Sigmoid colon (tissue), 7 donors: ENCODE measurements at regions of chr20 and their contacts with region 1.

Region 1: DNA sequence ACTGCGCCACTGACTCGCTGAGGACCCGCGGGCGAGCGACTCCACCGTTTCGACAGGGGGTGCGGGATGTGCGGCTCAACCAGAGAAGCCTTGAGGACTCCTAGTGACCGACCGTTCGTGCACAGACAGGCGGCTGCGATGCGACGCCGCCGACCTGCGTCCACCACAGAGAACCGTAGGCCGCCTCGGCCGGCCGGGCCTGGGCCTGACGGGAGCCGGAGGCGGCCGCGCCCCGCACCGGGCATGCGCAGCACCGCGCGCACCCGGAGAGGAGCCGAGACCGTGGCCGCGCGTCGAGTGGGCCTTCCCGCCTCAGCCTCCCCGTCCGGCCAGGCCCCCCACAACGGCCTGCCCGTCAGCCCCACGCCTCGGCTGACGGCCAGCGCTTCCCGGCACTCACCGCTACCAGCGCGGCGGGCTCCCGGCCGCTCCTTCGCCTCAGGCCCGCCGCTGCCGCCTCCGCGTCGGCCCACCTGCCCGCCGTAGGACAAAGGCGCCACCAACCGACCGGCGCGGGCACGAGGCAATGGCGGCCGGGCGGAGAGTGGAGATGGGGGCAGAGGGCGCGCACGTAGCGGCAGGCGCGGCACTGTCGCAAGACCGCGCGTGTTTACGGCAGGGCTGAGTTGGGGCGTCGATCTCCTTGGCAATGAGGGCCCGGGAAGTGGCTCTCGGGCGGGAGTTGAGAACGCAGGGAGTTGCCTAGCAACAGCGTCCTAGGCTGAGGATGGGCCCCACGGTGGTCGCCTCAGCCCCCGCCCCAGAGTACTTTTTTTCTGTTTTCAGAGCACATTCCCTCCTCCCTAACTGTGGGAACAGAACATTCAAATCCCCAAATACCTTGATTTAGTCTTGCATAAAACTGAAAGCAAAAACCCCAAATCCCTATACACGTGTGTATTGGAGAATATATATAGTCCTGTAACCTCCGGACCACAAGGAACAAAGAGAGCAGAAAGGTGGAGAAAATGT is at the start of gene NCOA5:
- DNase-seq: peak; percentile 98
- H3K4me3 ChIP-seq: peak within 1 kb of the TSS; percentile 68 to 85 (median 82)
- H3K27ac ChIP-seq: peak within 1 kb of the TSS; percentile 97 to 99 (median 98)
- H3K4me1 ChIP-seq: peaks cover 0 to 51% (median 44%) of the 10 kb centered on the region in 4 donors
- H3K27me3 ChIP-seq: no peaks in the 10 kb centered on the region
- CTCF ChIP-seq: no peak
- EP300 ChIP-seq: peak in 1 of 4 donors; percentile 39
- POLR2A ChIP-seq: peak; percentile 16 to 43
- total RNA-seq, gene NCOA5: 22.4 to 39.2 (median 29.5) TPM

Region 2: DNA sequence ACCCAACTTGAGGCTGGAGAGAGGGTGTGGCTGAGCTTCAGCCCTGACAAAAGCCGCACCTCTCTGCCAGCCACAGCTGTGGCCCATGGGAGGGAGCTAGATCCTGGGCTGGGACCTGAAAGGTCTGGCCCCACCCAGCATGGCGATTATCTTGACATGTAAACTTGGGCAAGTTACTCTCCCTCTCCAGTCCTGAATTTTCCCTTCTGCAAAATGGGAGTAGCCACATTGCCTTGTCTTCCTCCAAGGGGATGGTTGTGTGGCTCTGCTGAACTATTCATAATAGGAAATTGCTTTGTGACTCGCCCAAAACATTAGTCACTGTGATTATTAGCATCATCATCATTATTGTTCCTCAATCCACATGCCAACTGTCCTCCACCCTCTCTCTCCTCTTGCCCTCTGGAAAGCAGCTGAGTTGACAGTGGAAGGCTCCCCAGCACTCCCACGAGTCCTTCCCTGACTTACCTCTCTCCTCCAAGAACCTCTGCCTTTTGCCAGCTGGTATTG is 806.1 kb before region 1 on chr20:
- intact Hi-C with region 1: no loop called
- DNase-seq: no peak
- H3K4me3 ChIP-seq: no peak overlapping the region
- H3K27ac ChIP-seq: no peak overlapping the region
- H3K4me1 ChIP-seq: no peaks in the 10 kb centered on the region
- H3K27me3 ChIP-seq: peaks cover 0 to 3% (median 0%) of the 10 kb centered on the region in 3 donors
- CTCF ChIP-seq: no peak
- EP300 ChIP-seq: no peak
- POLR2A ChIP-seq: no peak

Region 3: DNA sequence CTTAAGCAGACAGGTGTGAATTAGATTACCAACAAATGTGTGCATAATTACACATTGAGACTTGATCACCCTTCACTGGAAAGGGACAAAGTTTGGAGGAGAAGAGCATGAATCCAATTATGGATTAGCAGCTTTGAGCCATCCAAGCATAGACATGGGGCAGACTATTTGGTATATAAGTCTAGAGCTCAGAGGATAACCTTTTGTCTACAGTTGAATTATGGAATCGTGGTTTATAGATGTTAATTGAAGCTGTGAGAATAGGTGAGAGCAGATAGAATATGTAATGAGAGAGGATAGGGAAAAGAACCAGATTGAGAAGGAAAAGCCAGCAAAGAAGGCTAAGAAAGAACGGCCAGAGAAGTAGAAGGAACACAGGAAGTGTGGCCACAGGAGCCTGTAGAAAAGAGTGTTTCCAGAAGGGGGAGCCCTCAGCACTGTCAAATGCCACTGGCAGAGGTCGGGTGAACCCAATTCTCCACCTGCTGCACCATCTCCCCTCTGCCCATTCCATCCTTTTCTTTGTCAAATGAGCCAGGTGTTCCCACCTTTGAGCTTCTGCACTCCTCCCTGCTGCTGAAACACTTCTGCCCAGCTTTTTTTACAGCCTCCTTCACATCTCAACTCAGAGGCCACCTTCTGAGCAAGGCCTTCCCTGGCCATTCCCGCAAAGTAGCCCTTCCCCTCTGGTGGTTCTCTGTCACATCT is 290.6 kb before region 1 on chr20:
- intact Hi-C with region 1: loop called (anchors 10 kb)
- DNase-seq: no peak
- H3K4me3 ChIP-seq: no peak overlapping the region
- H3K27ac ChIP-seq: peak overlapping the region; percentile 14 to 55 (median 26)
- H3K4me1 ChIP-seq: peaks cover 0 to 7% (median 4%) of the 10 kb centered on the region in 4 donors
- H3K27me3 ChIP-seq: no peaks in the 10 kb centered on the region
- CTCF ChIP-seq: peak; percentile 25 to 72 (median 66)
- EP300 ChIP-seq: no peak
- POLR2A ChIP-seq: no peak

Region 4: DNA sequence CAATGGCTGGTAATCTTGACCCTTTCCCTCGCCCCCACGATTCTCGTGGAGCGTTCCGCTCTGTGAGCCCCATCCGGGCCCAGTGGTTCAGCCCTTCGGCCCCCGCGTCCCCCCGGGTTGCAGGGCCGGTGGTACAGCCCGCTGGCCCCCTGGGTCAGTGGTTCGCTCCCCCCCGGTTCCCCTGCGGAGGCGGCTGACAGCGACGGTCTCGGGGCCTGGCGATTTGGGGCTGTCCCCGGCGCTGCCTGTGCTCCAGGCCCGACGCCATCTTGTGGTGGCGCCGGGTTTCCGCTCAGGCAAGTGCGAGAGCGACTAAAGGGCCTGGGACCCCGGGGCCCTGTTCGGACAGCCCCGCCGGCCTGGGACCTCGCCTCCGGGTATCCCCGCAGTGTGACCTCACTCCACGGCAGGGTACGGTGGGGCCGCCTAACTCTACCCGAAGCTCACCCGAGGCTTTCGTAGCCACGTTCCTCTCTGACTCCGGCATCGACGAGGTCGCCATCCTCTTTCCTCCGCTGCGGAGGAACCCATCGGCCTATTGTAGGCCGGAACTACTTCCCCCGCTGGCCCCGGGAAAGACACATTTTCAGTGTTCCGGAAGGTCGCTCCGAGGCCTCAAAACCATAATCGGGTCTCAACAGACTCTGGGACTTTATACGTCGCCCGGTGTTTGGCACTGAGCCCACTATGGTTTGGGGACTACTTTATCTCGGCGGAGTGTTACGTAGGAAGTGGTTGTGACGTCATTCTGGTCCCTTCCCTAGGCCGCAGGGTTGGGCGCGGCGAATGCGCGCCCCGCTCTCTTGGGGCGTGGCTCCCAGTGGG is 117.8 kb before region 1 on chr20 and contains the start of gene ZNF335:
- intact Hi-C with region 1: loop called (anchors 2 kb)
- DNase-seq: peak; percentile 98
- H3K4me3 ChIP-seq: peak within 1 kb of the TSS; percentile 65 to 92 (median 77)
- H3K27ac ChIP-seq: peak within 1 kb of the TSS; percentile 92 to 99 (median 98)
- H3K4me1 ChIP-seq: peaks cover 0 to 36% (median 25%) of the 10 kb centered on the region in 4 donors
- H3K27me3 ChIP-seq: no peaks in the 10 kb centered on the region
- CTCF ChIP-seq: peak; percentile 18 to 51 (median 38)
- EP300 ChIP-seq: peak in 1 of 4 donors; percentile 61
- POLR2A ChIP-seq: peak; percentile 49 to 62
- total RNA-seq, gene ZNF335: 12.0 to 24.4 (median 14.9) TPM

Region 5: DNA sequence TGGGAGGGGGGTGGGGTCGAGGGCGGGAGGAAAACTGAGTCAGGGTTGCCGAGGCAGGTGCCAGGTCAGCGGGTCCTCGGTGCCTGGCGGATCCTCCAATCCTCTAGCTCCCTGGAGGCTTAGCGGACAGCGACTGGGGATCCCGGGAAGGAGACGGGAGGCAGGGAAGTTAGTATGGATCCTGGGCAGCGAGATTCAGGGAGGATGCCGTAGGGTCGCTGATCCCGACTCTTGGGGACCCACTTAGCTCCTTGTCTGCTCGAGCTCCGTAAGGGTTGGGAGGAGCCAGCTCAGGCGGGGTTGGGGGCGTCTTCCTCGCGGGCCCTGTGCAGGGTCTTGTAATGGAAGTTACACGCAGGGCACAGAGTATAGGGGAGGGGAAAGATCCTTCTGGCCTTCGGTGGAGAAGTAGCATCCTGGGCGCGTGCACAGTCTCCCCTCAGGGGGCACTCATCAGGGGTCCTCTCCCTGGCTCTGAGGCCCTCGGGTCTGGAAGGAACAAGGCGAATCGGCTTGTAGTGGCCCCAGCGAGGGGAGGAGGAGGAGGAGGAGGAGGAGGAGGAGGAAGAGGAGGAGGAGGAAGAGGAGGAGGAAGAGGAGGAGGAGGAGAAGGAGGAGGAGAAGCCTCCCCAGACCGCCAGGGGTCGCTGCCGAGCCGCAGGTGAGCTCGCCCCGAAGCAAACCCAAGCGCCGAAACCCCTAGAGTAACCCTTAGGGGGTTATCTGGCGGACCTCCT is 67.1 kb before region 1 on chr20:
- intact Hi-C with region 1: loop called (anchors 1 kb)
- DNase-seq: no peak
- H3K4me3 ChIP-seq: no peak overlapping the region
- H3K27ac ChIP-seq: no peak overlapping the region
- H3K4me1 ChIP-seq: peaks cover 0 to 19% (median 17%) of the 10 kb centered on the region in 4 donors
- H3K27me3 ChIP-seq: peaks cover 23 to 97% (median 59%) of the 10 kb centered on the region in 3 donors
- CTCF ChIP-seq: peak; percentile 57 to 84 (median 79)
- EP300 ChIP-seq: no peak
- POLR2A ChIP-seq: no peak

Region 6: DNA sequence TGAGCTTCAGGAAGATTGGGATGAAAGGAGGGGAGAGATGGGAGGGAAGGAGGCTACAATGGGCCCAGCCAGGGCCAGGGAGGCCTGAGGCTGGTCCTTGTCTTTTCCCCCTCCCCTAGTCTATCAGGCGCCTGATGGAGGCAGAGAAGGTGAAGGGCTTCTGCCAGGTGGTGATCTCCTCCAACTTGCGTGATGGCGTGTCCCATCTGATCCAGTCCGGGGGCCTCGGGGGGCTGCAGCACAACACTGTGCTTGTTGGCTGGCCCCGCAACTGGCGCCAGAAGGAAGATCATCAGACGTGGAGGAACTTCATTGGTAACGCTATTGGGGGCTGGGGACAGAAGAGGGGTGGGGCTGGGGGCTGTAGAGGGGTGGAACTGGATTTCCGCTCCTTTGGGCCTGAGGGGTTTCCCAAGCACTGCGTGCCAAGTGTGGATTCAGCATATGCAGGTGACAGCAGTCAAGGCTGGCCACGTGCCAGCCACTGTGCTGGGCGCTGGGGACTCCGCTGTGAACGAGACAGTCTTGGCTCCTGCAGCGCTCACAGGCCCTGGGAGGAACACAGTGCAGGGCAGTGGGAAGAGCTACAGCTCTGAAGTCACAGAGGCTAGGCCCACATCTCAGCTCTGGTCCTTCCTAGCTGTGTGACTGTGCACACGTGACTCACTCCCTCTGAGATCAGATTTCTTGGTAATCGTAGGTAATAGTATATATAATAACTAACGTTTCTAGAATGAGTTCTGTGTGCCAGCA is 38.0 kb before region 1 on chr20:
- intact Hi-C with region 1: no loop called
- DNase-seq: peak; percentile 48
- H3K4me3 ChIP-seq: no peak overlapping the region
- H3K27ac ChIP-seq: no peak overlapping the region
- H3K4me1 ChIP-seq: no peaks in the 10 kb centered on the region
- H3K27me3 ChIP-seq: peaks cover 0 to 25% (median 4%) of the 10 kb centered on the region in 3 donors
- CTCF ChIP-seq: no peak
- EP300 ChIP-seq: no peak
- POLR2A ChIP-seq: no peak

Region 7: GRCh38 chr20:46363800-46364634 is 274.3 kb after region 1 on chr20:
- intact Hi-C with region 1: loop called (anchors 5 kb)
- DNase-seq: peak; percentile 94
- H3K4me3 ChIP-seq: peak overlapping the region; percentile 81 to 97 (median 93)
- H3K27ac ChIP-seq: peak overlapping the region; percentile 95 to 97 (median 96)
- H3K4me1 ChIP-seq: peaks cover 0 to 45% (median 36%) of the 10 kb centered on the region in 4 donors
- H3K27me3 ChIP-seq: no peaks in the 10 kb centered on the region
- CTCF ChIP-seq: no peak
- EP300 ChIP-seq: no peak
- POLR2A ChIP-seq: peak; percentile 83 to 85

Region 8: GRCh38 chr20:46689082-46689754 is 599.5 kb after region 1 on chr20 and contains the start of gene TP53RK:
- intact Hi-C with region 1: loop called (anchors 10 kb)
- DNase-seq: peak; percentile 100
- H3K4me3 ChIP-seq: peak within 1 kb of the TSS; percentile 80 to 91 (median 86)
- H3K27ac ChIP-seq: peak within 1 kb of the TSS; percentile 94 to 99 (median 96)
- H3K4me1 ChIP-seq: peaks cover 0 to 42% (median 29%) of the 10 kb centered on the region in 4 donors
- H3K27me3 ChIP-seq: no peaks in the 10 kb centered on the region
- CTCF ChIP-seq: peak; percentile 37 to 57 (median 50)
- EP300 ChIP-seq: no peak
- POLR2A ChIP-seq: peak; percentile 65 to 70
- total RNA-seq, gene TP53RK: 9.1 to 24.4 (median 18.9) TPM